Activated CD4-positive, alpha-beta memory T cell treated with anti-CD3 and anti-CD28 coated beads, Interleukin-2, amount 10 ng/mL, durations not matched to agents 7 days and 5 days (primary cell): ENCODE measurements at regions of chr1 and their contacts with region 1.

Region 1: DNA sequence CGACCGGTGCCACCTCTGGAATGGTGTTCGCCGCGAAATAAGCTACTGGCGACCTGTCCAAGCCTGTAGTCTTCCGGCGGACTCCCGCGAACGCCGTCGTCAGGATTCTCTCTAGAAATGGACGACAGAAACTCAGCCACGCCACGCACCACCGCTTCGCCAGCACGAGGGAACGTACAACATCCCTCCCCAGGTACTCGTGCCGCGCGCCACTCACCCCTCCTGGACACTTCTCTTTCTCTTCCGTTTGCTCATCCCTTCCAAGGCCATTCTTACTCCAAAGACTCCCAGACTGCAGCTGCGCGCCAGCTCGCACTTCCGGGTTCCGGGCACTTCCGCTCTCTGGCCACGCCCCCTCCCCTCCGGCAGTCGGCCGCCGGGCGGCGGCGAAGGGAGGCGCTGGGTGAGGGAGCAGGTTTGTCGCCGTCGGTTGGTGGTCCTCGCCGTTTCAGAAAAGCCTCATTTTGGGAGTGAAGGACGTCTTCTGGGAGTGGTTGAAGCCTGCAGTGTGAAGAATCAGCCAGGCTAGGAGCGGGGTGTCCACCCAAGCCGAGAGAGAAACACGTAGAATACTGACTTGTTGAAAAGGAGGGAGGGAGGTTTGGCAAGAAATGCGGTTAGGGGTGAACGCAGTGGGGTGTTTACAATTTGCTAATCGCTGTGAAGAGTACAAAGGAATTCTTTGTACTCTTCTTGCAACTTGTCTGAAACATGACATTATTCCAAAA is at the start of gene RBM34:
- DNase-seq: peak; percentile 93
- H3K4me3 Mint-ChIP-seq: peak within 1 kb of the TSS; percentile 98
- H3K27ac Mint-ChIP-seq: peak within 1 kb of the TSS; percentile 95
- H3K4me1 Mint-ChIP-seq: peaks cover 26% of the 10 kb centered on the region
- H3K27me3 Mint-ChIP-seq: no peaks in the 10 kb centered on the region
- total RNA-seq, gene RBM34: 95.7 to 102 TPM

Region 2: DNA sequence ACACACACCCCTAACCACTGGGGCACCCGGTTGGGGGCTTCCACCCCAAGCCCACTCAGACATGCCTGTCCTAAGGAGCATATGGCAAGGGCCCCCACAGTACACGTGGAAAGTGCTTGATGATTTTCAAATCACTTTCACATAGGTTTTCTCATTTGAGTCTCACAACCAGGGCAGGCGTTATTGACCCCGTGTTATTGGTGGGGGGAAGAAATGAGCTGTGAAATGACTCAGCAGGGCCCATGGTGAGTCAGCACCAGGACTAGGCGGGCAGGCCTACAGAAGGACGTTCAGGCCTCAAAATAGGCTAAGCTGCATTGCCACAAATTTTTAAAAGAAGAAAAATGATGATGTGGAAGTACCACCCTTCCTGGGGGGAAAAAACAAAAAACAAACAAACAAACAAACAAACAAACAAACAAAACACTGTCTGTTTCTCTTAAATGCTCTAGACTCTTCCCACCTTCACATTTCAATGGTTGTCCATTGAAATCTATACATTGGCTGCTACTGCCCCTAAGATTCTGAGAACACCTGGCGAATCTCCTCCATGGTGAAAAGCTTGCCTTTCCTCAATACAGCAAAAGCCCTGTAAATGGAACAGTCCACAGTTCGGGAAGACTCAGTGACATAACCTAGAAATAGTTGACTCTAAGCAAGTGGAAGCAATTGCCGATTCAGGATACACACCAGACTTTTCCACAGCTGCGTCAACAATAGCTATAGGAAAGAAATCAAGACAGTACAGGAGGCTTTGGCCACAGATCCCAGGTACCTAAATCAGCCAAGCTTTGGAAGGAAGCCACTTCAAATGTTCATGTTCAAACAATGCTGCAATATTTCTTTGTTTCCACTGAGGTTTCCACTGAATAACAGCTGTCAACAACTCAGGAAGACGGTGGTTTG is 267.1 kb before region 1 on chr1:
- CTCF ChIA-PET with region 1: no interaction called
- POLR2A ChIA-PET with region 1: no interaction called
- DNase-seq: peak; percentile 41
- H3K4me3 Mint-ChIP-seq: no peak overlapping the region
- H3K27ac Mint-ChIP-seq: no peak overlapping the region
- H3K4me1 Mint-ChIP-seq: peaks cover 42% of the 10 kb centered on the region
- H3K27me3 Mint-ChIP-seq: no peaks in the 10 kb centered on the region

Region 3: GRCh38 chr1:235105051-235106043 is 55.8 kb before region 1 on chr1:
- CTCF ChIA-PET with region 1: interaction called, 4 read pairs
- POLR2A ChIA-PET with region 1: interaction called, 24 read pairs
- DNase-seq: peak; percentile 44
- H3K4me3 Mint-ChIP-seq: peak overlapping the region; percentile 60
- H3K27ac Mint-ChIP-seq: peak overlapping the region; percentile 85
- H3K4me1 Mint-ChIP-seq: peaks cover 42% of the 10 kb centered on the region
- H3K27me3 Mint-ChIP-seq: peaks cover 8% of the 10 kb centered on the region

Region 4: GRCh38 chr1:235128456-235129328 is 32.4 kb before region 1 on chr1 and contains the start of gene TOMM20:
- CTCF ChIA-PET with region 1: interaction called, 3 read pairs
- POLR2A ChIA-PET with region 1: interaction called, 36 read pairs
- DNase-seq: peak; percentile 95
- H3K4me3 Mint-ChIP-seq: peak within 1 kb of the TSS; percentile 98
- H3K27ac Mint-ChIP-seq: peak within 1 kb of the TSS; percentile 92
- H3K4me1 Mint-ChIP-seq: peaks cover 39% of the 10 kb centered on the region
- H3K27me3 Mint-ChIP-seq: no peaks in the 10 kb centered on the region
- total RNA-seq, gene TOMM20: 81.4 to 89.3 TPM

Region 5: GRCh38 chr1:235138821-235139220 is 22.3 kb before region 1 on chr1:
- CTCF ChIA-PET with region 1: no interaction called
- POLR2A ChIA-PET with region 1: interaction called, 13 read pairs
- DNase-seq: no peak
- H3K4me3 Mint-ChIP-seq: no peak overlapping the region
- H3K27ac Mint-ChIP-seq: peak overlapping the region; percentile 13
- H3K4me1 Mint-ChIP-seq: peaks cover 6% of the 10 kb centered on the region
- H3K27me3 Mint-ChIP-seq: no peaks in the 10 kb centered on the region

Region 6: GRCh38 chr1:235147269-235147668 is 13.9 kb before region 1 on chr1:
- CTCF ChIA-PET with region 1: interaction called, 3 read pairs
- POLR2A ChIA-PET with region 1: interaction called, 12 read pairs
- DNase-seq: no peak
- H3K4me3 Mint-ChIP-seq: no peak overlapping the region
- H3K27ac Mint-ChIP-seq: no peak overlapping the region
- H3K4me1 Mint-ChIP-seq: peaks cover 19% of the 10 kb centered on the region
- H3K27me3 Mint-ChIP-seq: no peaks in the 10 kb centered on the region